Right cardiac atrium (tissue), 5 donors: ENCODE measurements at regions of chr14 and their contacts with region 1.

Region 1: GRCh38 chr14:31529053-31529452 is 32.2 kb upstream of the NUBPL start:
- DNase-seq: no peak
- ATAC-seq: no peak
- H3K4me3 ChIP-seq: no peak overlapping the region
- H3K27ac ChIP-seq: no peak overlapping the region
- H3K4me1 ChIP-seq: no peaks in the 10 kb centered on the region
- H3K27me3 ChIP-seq: no peaks in the 10 kb centered on the region

Region 2: GRCh38 chr14:31371646-31372045 is 157.4 kb before region 1 on chr14:
- intact Hi-C with region 1: no loop called
- DNase-seq: no peak
- ATAC-seq: no peak
- H3K4me3 ChIP-seq: no peak overlapping the region
- H3K27ac ChIP-seq: no peak overlapping the region
- H3K4me1 ChIP-seq: no peaks in the 10 kb centered on the region
- H3K27me3 ChIP-seq: no peaks in the 10 kb centered on the region

Region 3: GRCh38 chr14:31582286-31582691 is 53.2 kb after region 1 on chr14:
- intact Hi-C with region 1: no loop called
- DNase-seq: peak in 1 of 3 donors; percentile 18
- ATAC-seq: peak in 1 of 2 donors; percentile 68
- H3K4me3 ChIP-seq: no peak overlapping the region
- H3K27ac ChIP-seq: no peak overlapping the region
- H3K4me1 ChIP-seq: peaks cover 5% of the 10 kb centered on the region
- H3K27me3 ChIP-seq: no peaks in the 10 kb centered on the region

Region 4: GRCh38 chr14:32244404-32244803 is 715.4 kb after region 1 on chr14:
- intact Hi-C with region 1: loop called in 1 of 4 experiments (anchors 10 kb)
- DNase-seq: no peak
- ATAC-seq: no peak
- H3K4me3 ChIP-seq: no peak overlapping the region
- H3K27ac ChIP-seq: no peak overlapping the region
- H3K4me1 ChIP-seq: no peaks in the 10 kb centered on the region
- H3K27me3 ChIP-seq: no peaks in the 10 kb centered on the region